ENCODE measurements at regions of chr7 and their contacts with region 1.

Region 1: GRCh38 chr7:133904776-133905175 is 222.4 kb upstream of the LRGUK start:
- DNase-seq: no peak
- H3K4me3 ChIP-seq: no peak overlapping the region
- H3K27ac ChIP-seq: no peak overlapping the region
- H3K4me1 ChIP-seq: no peaks in the 10 kb centered on the region
- H3K27me3 ChIP-seq: no peaks in the 10 kb centered on the region
- CTCF ChIP-seq: no peak
- POLR2A ChIP-seq: no peak

Region 2: DNA sequence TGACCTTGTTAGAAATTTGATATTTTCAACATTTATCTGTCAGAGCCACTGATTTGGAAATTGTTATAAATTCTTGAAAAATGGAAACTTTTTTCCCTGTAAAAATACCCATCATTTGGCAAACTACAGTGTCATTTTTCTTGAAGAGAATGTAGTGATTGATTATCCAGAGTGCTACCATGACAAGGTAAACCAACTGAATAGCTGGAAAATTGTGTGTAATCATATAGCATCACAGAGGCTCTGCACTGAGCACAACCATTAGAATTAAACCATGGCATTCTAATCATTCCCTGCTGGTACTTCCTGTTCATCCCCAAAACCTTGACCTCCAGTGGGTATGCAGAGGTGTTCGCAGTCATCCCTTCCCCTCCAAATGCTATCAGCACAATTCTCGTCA is 18.0 kb before region 1 on chr7:
- intact Hi-C with region 1: loop called (anchors 1 kb)
- DNase-seq: no peak
- H3K4me3 ChIP-seq: no peak overlapping the region
- H3K27ac ChIP-seq: no peak overlapping the region
- H3K4me1 ChIP-seq: no peaks in the 10 kb centered on the region
- H3K27me3 ChIP-seq: no peaks in the 10 kb centered on the region
- CTCF ChIP-seq: no peak
- POLR2A ChIP-seq: no peak

Region 3: GRCh38 chr7:134044682-134045081 is 139.9 kb after region 1 on chr7:
- intact Hi-C with region 1: no loop called
- DNase-seq: no peak
- H3K4me3 ChIP-seq: no peak overlapping the region
- H3K27ac ChIP-seq: no peak overlapping the region
- H3K4me1 ChIP-seq: no peaks in the 10 kb centered on the region
- H3K27me3 ChIP-seq: no peaks in the 10 kb centered on the region
- CTCF ChIP-seq: no peak
- POLR2A ChIP-seq: no peak

Measured in uterus (tissue), 4 donors.